PC-9 (cell line): ENCODE measurements at regions of chr7 and their contacts with region 1.

Region 1: DNA sequence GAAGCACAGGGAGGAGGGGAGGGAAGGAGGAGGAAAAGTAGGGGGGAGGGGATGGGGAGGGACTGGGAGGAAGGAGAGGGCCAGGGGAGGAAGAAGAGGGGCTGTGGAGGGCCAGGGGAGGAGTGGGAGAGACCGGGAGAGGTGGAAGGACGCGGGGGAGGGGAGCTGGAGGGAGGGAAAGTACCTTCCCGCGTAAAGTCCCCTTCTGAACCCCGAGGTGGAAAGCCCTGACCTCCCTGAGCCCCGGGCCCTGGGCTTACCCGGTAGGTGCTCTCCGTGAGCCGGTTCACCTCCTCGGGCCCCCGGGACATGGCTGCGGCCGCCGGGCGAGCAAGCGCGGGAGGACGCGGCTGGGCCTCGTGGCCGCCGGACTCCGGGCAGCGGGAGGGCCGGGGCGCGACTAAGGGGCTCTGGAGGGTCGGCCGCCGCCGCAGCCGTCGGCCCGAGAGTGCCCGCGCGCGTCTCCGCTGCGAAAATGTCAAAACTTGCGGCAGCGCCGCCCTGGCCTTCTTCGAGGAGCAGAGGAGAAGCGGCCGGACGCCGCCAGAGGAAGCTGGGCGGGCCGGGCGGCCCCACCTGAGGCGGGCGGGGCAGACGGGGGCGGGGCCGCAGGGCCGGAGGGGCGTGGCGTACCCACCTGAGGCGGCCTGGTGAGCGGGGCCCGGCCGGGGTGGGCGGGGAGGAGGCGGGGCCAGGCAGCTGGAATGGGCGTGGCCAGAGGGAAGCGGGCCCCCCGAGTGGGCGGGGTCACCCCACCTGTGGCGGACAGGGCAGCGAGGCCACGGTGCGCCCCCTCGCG is at the start of gene BAIAP2L1:
- DNase-seq: peak; percentile 76 to 100
- H3K4me3 ChIP-seq: peak within 1 kb of the TSS; percentile 87
- H3K27ac ChIP-seq: peak within 1 kb of the TSS; percentile 85
- H3K4me1 ChIP-seq: peaks cover 29% of the 10 kb centered on the region
- H3K27me3 ChIP-seq: no peaks in the 10 kb centered on the region
- CTCF ChIP-seq: no peak
- total RNA-seq, gene BAIAP2L1: 89.4 and 102 TPM in 2 replicates

Region 2: GRCh38 chr7:98266840-98267239 is 133.9 kb before region 1 on chr7:
- CTCF ChIA-PET with region 1: interaction called, 20 read pairs
- POLR2A ChIA-PET with region 1: no interaction called
- intact Hi-C with region 1: no loop called
- DNase-seq: no peak
- H3K4me3 ChIP-seq: no peak overlapping the region
- H3K27ac ChIP-seq: no peak overlapping the region
- H3K4me1 ChIP-seq: peaks cover 7% of the 10 kb centered on the region
- H3K27me3 ChIP-seq: no peaks in the 10 kb centered on the region
- CTCF ChIP-seq: peak; percentile 57; the same call in 1 of the 2 replicates

Region 3: GRCh38 chr7:98348709-98349474 is 51.8 kb before region 1 on chr7:
- CTCF ChIA-PET with region 1: no interaction called
- POLR2A ChIA-PET with region 1: no interaction called
- intact Hi-C with region 1: loop called (anchors 1 kb)
- DNase-seq: peak; percentile 87 to 93
- H3K4me3 ChIP-seq: no peak overlapping the region
- H3K27ac ChIP-seq: peak overlapping the region; percentile 71
- H3K4me1 ChIP-seq: peaks cover 59% of the 10 kb centered on the region
- H3K27me3 ChIP-seq: no peaks in the 10 kb centered on the region
- CTCF ChIP-seq: no peak

Region 4: DNA sequence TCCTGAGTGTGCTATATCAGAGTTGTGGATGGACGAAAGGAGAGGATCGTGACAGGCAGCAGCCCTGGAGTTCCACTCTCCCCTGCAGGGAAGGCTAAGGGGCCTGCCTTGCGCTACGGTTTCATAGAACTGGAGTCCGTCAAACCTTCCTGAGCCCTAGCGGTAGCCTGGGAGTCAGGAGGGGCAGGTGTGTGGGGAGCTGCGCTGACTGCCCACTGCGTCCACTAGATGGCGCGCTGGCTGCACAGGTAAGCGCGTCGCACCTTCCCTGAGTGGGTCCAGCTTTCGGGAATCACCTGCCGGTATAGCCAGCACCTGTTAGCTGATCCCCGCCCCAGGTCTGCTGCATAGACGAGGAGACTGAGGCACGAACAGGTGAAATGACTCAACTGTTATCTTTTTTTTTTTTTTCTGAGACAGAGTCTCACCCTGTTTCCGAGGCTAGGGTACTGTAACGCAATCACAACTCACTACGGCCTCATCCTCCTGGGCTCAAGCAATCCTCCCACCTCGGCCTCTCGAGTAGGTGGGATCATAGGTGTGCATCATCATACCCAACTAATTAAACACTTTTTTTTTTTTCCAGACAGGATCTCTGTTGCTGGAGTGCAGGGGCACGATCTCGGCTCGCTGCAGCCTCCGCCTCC is 20.3 kb after region 1 on chr7:
- CTCF ChIA-PET with region 1: interaction called, 9 read pairs
- POLR2A ChIA-PET with region 1: interaction called, 7 read pairs
- intact Hi-C with region 1: loop called (anchors 1 kb)
- DNase-seq: peak; percentile 69 to 88
- H3K4me3 ChIP-seq: peak overlapping the region; percentile 6; the same call in 1 of the 2 replicates
- H3K27ac ChIP-seq: no peak overlapping the region
- H3K4me1 ChIP-seq: peaks cover 44% of the 10 kb centered on the region
- H3K27me3 ChIP-seq: no peaks in the 10 kb centered on the region
- CTCF ChIP-seq: peak; percentile 94